CD8-positive, alpha-beta T cell (primary cell): ENCODE measurements at regions of chr5 and their contacts with region 1.

Region 1: GRCh38 chr5:59188419-59189225 is 605.7 kb downstream of the RAB3C start:
- DNase-seq: peak; percentile 8 to 80 (median 57)
- ATAC-seq: peak; percentile 79
- H3K4me3 ChIP-seq: no peak overlapping the region
- H3K4me3 Mint-ChIP-seq: peak overlapping the region; percentile 5
- H3K27ac ChIP-seq: no peak overlapping the region
- H3K27ac Mint-ChIP-seq: no peak overlapping the region
- H3K4me1 ChIP-seq: no peaks in the 10 kb centered on the region
- H3K4me1 Mint-ChIP-seq: peaks cover 3% of the 10 kb centered on the region
- H3K27me3 ChIP-seq: no peaks in the 10 kb centered on the region
- H3K27me3 Mint-ChIP-seq: peaks cover 14% of the 10 kb centered on the region
- CTCF ChIP-seq: peak; percentile 98

Region 2: GRCh38 chr5:59174248-59174844 is 14.3 kb before region 1 on chr5:
- CTCF ChIA-PET with region 1: interaction called, 25 read pairs
- POLR2A ChIA-PET with region 1: no interaction called
- intact Hi-C with region 1: no loop called
- DNase-seq: peak in 6 of 9 experiments; percentile 8 to 81 (median 30)
- ATAC-seq: peak; percentile 80
- H3K4me3 ChIP-seq: no peak overlapping the region
- H3K4me3 Mint-ChIP-seq: no peak overlapping the region
- H3K27ac ChIP-seq: no peak overlapping the region
- H3K27ac Mint-ChIP-seq: no peak overlapping the region
- H3K4me1 ChIP-seq: no peaks in the 10 kb centered on the region
- H3K4me1 Mint-ChIP-seq: no peaks in the 10 kb centered on the region
- H3K27me3 ChIP-seq: no peaks in the 10 kb centered on the region
- H3K27me3 Mint-ChIP-seq: no peaks in the 10 kb centered on the region
- CTCF ChIP-seq: peak; percentile 87

Region 3: DNA sequence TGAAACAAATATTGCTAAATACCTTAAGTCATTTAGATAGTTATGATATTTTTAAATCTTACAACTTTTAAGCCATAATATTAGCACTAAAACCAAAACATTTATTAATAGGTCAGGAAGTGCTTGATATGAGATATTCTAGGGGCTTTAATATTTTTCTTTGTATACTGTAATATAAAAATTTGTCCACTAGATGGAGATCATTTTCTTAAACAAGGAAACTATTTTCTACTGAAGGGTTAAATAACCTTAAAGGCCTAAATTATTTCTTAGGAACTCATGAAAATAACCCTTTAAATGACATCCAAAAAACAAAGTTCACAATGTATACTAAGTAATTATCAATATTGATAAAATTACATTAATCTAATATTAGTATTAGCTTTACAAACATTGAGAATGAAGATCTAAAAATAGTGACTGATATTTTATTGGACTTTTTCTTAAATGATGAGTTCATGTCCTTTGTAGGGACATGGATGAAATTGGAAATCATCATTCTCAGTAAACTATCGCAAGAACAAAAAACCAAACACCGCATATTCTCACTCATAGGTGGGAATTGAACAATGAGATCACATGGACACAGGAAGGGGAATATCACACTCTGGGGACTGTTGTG is 29.9 kb after region 1 on chr5:
- CTCF ChIA-PET with region 1: interaction called, 10 read pairs
- POLR2A ChIA-PET with region 1: no interaction called
- intact Hi-C with region 1: no loop called
- DNase-seq: no peak
- ATAC-seq: no peak
- H3K4me3 ChIP-seq: no peak overlapping the region
- H3K4me3 Mint-ChIP-seq: no peak overlapping the region
- H3K27ac ChIP-seq: no peak overlapping the region
- H3K27ac Mint-ChIP-seq: no peak overlapping the region
- H3K4me1 ChIP-seq: no peaks in the 10 kb centered on the region
- H3K4me1 Mint-ChIP-seq: no peaks in the 10 kb centered on the region
- H3K27me3 ChIP-seq: no peaks in the 10 kb centered on the region
- H3K27me3 Mint-ChIP-seq: peaks cover 22% of the 10 kb centered on the region
- CTCF ChIP-seq: no peak

Region 4: GRCh38 chr5:59380350-59380951 is 191.8 kb after region 1 on chr5:
- CTCF ChIA-PET with region 1: interaction called, 67 read pairs
- POLR2A ChIA-PET with region 1: interaction called, 3 read pairs
- intact Hi-C with region 1: loop called (anchors 1 kb)
- DNase-seq: peak in 2 of 9 experiments; percentile 57 to 67
- ATAC-seq: peak; percentile 54
- H3K4me3 ChIP-seq: no peak overlapping the region
- H3K4me3 Mint-ChIP-seq: no peak overlapping the region
- H3K27ac ChIP-seq: no peak overlapping the region
- H3K27ac Mint-ChIP-seq: no peak overlapping the region
- H3K4me1 ChIP-seq: no peaks in the 10 kb centered on the region
- H3K4me1 Mint-ChIP-seq: peaks cover 2% of the 10 kb centered on the region
- H3K27me3 ChIP-seq: no peaks in the 10 kb centered on the region
- H3K27me3 Mint-ChIP-seq: no peaks in the 10 kb centered on the region
- CTCF ChIP-seq: peak; percentile 50

Region 5: DNA sequence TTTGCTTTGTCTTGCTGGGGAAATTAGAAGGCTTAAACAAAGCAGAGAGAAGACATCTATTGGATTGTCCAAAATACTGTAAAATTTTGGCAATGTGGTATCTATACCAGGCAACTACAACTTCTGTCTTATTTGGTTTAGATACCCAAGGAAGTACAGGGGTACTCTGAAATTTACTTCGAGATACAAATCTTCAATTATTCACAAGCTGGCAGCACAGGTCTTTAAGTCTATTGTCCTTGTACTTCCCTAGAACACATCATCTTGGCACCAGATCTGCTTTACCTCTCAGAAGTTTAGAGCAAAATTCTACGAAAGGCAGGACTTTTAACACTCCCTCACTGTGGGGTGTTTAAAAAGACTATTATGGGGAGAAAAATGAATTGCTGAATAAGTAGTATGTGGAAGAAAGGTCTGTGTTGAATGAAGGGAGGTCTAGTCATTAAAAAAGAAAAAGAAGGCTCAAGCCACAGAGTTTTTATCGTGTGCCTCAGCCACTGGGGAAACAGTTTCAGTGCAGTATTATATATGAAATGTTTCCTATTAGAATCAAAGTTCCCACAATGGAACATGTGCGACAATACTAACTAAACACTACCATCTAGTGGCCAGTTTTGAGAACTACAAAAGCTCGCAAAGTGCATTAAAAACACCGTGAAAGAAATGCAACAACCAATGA is 611.2 kb after region 1 on chr5:
- CTCF ChIA-PET with region 1: interaction called, 8 read pairs
- POLR2A ChIA-PET with region 1: no interaction called
- intact Hi-C with region 1: loop called (anchors 1 kb)
- DNase-seq: peak in 3 of 9 experiments; percentile 8 to 61 (median 45)
- ATAC-seq: peak; percentile 62
- H3K4me3 ChIP-seq: no peak overlapping the region
- H3K4me3 Mint-ChIP-seq: no peak overlapping the region
- H3K27ac ChIP-seq: no peak overlapping the region
- H3K27ac Mint-ChIP-seq: no peak overlapping the region
- H3K4me1 ChIP-seq: no peaks in the 10 kb centered on the region
- H3K4me1 Mint-ChIP-seq: no peaks in the 10 kb centered on the region
- H3K27me3 ChIP-seq: no peaks in the 10 kb centered on the region
- H3K27me3 Mint-ChIP-seq: peaks cover 2% of the 10 kb centered on the region
- CTCF ChIP-seq: peak; percentile 75